ENCODE measurements at regions of chr19 and their contacts with region 1.

Region 1: DNA sequence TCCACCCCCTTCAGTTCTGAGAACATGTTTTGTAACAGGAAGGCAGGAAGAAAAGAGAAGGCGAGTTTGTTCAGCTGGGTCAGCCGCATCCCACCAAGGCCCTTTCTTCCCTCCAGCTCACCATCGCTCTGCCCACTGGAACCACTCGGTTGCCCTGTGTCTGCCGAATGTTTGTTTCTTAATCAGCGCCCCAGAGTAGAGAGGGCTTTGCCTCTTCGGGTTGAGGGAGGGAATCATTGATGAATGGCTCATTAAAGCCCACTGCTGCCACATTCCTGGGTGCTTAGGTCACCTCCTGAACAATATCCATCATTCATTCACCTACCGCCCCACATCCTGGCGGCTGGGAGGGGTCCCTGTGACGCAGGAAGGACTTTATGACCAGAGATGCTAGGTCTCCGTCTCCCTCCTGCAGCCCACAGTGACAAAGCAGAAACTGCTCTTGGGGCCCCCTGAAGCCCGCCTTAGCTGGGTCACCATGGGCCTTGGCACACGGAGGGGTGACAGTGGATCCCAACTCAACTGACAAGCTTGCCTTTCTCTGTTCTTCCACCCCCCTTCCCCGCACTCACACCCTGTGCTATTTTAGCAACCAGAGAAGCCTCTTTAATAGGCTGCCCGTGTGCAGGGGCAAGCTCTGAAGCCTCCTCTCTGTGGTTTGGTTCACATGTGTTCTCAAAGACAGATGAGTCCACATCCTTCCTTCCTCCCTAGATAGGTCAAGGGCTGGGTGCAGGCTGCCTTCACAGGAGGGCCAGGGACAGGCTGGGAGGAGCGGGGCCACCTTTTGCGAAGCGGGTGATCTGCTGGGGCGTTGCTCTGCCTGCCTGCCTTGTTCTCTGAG is 46.2 kb downstream of the ACTN4 start:
- DNase-seq: no peak
- ATAC-seq: no peak
- H3K4me3 ChIP-seq: no peak overlapping the region
- H3K27ac ChIP-seq: peak overlapping the region; percentile 99 to 100
- H3K4me1 ChIP-seq: peaks cover 0 to 3% of the 10 kb centered on the region in 2 donors
- H3K27me3 ChIP-seq: no peaks in the 10 kb centered on the region

Region 2: DNA sequence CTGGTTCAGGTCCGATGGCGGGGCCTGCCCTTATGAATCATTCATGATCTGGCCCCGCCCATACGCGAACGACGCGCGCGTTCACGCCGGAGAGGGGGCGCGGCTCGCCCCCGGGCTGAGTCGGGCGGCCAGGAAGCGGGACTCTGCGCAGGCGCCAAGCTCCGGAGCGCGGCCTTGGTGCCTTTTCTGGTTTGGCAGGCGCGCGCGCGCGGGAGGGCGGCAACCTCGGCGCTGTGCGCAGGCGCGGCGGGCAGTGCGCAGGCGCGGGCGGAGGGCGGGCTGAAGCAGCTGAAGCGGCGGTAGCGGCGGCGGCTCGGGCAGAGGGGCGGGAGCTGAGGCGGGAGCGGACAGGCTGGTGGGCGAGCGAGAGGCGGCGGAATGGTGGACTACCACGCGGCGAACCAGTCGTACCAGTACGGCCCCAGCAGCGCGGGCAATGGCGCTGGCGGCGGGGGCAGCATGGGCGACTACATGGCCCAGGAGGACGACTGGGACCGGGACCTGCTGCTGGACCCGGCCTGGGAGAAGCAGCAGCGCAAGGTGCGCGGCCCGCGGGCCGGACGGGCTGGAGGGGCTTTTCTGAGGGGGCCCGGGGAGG is 46.1 kb before region 1 on chr19 and contains the start of gene ACTN4:
- intact Hi-C with region 1: loop called in 1 of 2 experiments (anchors 2 kb)
- DNase-seq: peak; percentile 99 to 100
- ATAC-seq: peak; percentile 94
- H3K4me3 ChIP-seq: peak within 1 kb of the TSS; percentile 98 to 100
- H3K27ac ChIP-seq: peak within 1 kb of the TSS; percentile 95 to 97
- H3K4me1 ChIP-seq: peaks cover 0 to 3% of the 10 kb centered on the region in 2 donors
- H3K27me3 ChIP-seq: no peaks in the 10 kb centered on the region
- total RNA-seq, gene ACTN4: 794 to 1,985 TPM

Region 3: DNA sequence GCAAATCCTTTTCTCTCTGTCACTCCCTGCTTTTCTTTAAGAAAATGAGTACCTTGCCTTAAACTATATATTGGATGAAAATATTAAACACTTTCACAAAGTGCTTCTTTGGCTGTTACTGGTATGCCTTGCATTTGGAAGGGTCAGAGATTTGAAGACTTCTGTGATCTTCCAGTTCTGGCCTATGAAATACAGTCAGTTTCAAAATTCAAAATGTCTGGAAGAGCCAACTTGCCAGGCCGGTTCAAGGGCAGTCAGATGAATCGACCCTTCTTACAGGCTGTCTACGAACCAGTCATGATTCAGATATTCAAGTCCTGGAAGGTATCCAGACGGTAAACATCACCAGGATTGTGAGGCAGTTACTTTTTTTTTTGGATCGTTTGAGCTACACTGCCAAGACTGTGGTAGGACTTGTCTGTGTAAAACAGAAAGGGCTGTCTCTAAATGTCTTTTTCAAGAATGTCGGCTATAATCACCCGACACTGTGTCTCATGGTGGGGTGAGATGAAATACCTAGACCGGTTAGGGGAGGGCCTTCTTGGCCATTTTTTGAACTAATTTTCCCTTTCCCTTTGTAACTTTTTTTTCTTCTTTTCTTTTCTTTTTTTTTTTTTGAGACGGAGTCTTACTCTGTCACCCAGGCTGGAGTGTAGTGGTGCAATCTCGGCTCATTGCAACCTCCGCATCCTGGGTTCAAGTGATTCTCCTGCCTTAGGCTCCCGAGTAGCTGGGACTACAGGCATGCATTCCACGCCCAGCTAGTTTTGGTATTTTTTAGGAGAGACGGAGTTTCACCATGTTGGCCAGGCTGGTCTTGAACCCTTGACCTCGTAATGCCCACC is 34.9 kb before region 1 on chr19:
- intact Hi-C with region 1: loop called (anchors 2 kb)
- DNase-seq: no peak
- ATAC-seq: peak; percentile 76
- H3K4me3 ChIP-seq: no peak overlapping the region
- H3K27ac ChIP-seq: peak overlapping the region; percentile 92 to 99
- H3K4me1 ChIP-seq: peaks cover 9 to 22% of the 10 kb centered on the region in 2 donors
- H3K27me3 ChIP-seq: no peaks in the 10 kb centered on the region

Measured in aorta (tissue), 5 donors.